MCF 10A (cell line): ENCODE measurements at regions of chr1 and their contacts with region 1.

Region 1: GRCh38 chr1:150967936-150968890 is 6.4 kb downstream of the CERS2 start:
- DNase-seq: no peak
- H3K4me3 Mint-ChIP-seq: no peak overlapping the region
- H3K27ac Mint-ChIP-seq: peak overlapping the region; percentile 36
- H3K4me1 Mint-ChIP-seq: peaks cover 35% of the 10 kb centered on the region
- H3K27me3 Mint-ChIP-seq: no peaks in the 10 kb centered on the region
- CTCF ChIP-seq: no peak

Region 2: DNA sequence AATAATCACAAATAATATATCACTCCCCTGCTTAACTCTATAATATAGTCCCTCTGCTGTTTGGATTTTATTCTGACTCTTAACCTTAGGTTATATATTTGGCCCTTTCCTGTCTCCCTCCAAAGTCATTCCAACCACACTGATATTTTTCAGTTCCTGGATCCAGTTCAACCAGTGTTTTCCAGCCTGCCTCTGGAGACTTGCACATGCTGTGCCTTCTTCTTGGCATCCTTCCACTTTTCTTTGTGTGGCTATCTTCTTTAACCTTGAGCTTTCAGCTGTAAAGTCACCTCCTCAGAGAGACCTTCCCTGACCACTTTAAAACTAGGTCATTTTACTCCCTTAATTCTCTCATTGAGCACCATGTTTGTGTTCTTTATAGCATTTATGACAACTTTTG is 12.9 kb before region 1 on chr1:
- CTCF ChIA-PET with region 1: interaction called, 11 read pairs
- POLR2A ChIA-PET with region 1: interaction called, 8 read pairs
- intact Hi-C with region 1: no loop called
- DNase-seq: no peak
- H3K4me3 Mint-ChIP-seq: no peak overlapping the region
- H3K27ac Mint-ChIP-seq: no peak overlapping the region
- H3K4me1 Mint-ChIP-seq: no peaks in the 10 kb centered on the region
- H3K27me3 Mint-ChIP-seq: no peaks in the 10 kb centered on the region
- CTCF ChIP-seq: no peak

Region 3: DNA sequence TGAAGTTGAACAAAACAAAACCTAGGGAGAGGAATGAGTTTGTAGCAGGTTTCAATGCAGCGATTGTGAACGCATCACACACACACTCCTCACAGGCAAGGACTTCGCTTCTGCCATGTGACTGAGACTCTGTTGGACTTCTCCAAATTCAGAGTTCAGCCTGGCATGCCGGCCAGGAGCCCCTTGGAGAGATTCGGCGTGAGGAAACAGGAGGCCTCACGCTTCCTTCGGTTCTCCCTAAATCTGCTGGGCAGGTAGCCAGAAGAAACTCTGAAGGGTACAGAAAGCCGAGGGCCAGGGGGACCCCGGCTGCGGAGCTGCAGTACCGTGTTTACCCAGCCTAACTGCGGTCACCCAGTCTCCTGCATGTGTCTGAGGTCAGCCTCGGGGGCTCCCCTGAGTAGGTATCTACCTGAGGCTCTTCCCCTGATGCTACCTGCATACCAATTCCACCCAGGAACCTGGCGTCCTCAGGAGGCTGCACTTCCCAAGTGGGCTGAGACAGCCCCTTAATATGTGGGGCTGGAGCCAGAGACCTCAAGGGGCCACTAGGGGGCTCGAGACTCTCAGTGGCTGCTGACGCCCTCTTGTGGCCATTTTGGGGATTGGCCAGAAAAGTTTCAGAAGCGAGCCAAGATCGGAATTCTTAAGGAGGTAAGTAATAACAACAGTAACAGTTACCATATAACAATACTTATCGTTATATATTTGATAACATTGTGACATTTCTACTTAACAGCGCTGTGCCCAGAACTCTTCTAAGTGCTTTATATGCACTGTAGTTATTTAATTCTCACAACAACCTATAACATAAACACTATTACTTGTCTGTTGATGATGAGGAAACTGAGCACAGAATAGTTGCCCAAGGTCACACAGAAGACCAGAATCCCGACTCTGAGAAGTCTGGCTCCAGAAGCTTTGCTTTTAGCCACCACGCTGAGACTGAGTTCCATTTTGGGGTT is 11.2 kb after region 1 on chr1:
- CTCF ChIA-PET with region 1: interaction called, 7 read pairs
- POLR2A ChIA-PET with region 1: interaction called, 12 read pairs
- intact Hi-C with region 1: no loop called
- DNase-seq: peak; percentile 95
- H3K4me3 Mint-ChIP-seq: no peak overlapping the region
- H3K27ac Mint-ChIP-seq: no peak overlapping the region
- H3K4me1 Mint-ChIP-seq: peaks cover 32% of the 10 kb centered on the region
- H3K27me3 Mint-ChIP-seq: no peaks in the 10 kb centered on the region
- CTCF ChIP-seq: peak; percentile 100